Panc1 (cell line): ENCODE measurements at regions of chr4 and their contacts with region 1.

Region 1: DNA sequence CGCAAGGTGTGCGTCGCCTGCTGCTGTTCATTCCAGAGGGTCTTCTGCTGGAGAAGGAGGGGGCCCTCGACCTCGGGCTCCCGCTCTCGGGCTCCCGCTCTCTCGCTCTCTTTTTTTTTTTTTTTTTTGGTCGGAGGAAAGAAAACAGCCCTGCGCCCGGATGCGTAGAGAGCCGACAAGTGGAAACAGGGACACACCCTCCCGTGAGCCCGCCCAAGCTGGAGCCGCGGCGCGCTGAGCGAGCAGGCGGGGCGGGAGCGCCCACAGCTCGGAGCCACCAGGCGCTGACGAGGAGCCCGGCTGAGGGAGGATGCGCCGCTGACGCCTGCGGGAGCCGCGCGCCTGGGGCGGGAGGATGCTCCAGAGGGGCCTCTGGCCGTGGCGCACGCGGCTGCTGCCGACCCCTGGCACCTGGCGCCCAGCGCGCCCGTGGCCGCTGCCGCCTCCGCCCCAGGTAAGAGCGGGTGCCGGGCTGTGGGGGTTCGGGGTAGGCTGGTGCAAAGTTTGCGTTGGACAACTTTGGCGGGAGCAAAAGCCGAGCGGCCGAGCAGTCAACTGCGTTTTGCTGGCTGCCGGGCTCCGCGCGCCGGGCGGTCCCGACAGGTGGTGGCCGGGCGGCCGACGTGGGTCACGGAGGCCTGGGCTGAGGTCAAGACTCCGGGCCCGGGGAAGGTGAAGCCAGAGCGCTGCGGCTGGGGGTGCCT is at the start of gene MCUB:
- DNase-seq: peak; percentile 39
- ATAC-seq: peak; percentile 100
- H3K4me3 ChIP-seq: peak within 1 kb of the TSS; percentile 64 to 69
- H3K27ac ChIP-seq: peak within 1 kb of the TSS; percentile 72
- H3K4me1 ChIP-seq: no peaks in the 10 kb centered on the region; the same call in 1 of the 2 replicates
- H3K27me3 ChIP-seq: no peaks in the 10 kb centered on the region
- CTCF ChIP-seq: no peak
- total RNA-seq, gene MCUB: 24.1 TPM

Region 2: GRCh38 chr4:109009909-109010308 is 550.2 kb before region 1 on chr4:
- CTCF ChIA-PET with region 1: no interaction called
- POLR2A ChIA-PET with region 1: no interaction called
- in situ Hi-C with region 1: no loop called
- intact Hi-C with region 1: no loop called
- DNase-seq: no peak
- ATAC-seq: no peak
- H3K4me3 ChIP-seq: no peak overlapping the region
- H3K27ac ChIP-seq: no peak overlapping the region
- H3K4me1 ChIP-seq: no peaks in the 10 kb centered on the region
- H3K27me3 ChIP-seq: no peaks in the 10 kb centered on the region
- CTCF ChIP-seq: no peak

Region 3: GRCh38 chr4:109434007-109434971 is 125.8 kb before region 1 on chr4:
- CTCF ChIA-PET with region 1: no interaction called
- POLR2A ChIA-PET with region 1: interaction called, 10 read pairs
- in situ Hi-C with region 1: no loop called
- intact Hi-C with region 1: no loop called
- DNase-seq: no peak
- ATAC-seq: peak; percentile 80
- H3K4me3 ChIP-seq: peak overlapping the region; percentile 72 to 78
- H3K27ac ChIP-seq: peak overlapping the region; percentile 70
- H3K4me1 ChIP-seq: peaks cover 8% of the 10 kb centered on the region
- H3K27me3 ChIP-seq: no peaks in the 10 kb centered on the region
- CTCF ChIP-seq: no peak

Region 4: GRCh38 chr4:109578846-109579245 is 18.7 kb after region 1 on chr4:
- CTCF ChIA-PET with region 1: no interaction called
- POLR2A ChIA-PET with region 1: no interaction called
- in situ Hi-C with region 1: no loop called
- intact Hi-C with region 1: no loop called
- DNase-seq: no peak
- ATAC-seq: no peak
- H3K4me3 ChIP-seq: no peak overlapping the region
- H3K27ac ChIP-seq: no peak overlapping the region
- H3K4me1 ChIP-seq: no peaks in the 10 kb centered on the region
- H3K27me3 ChIP-seq: no peaks in the 10 kb centered on the region
- CTCF ChIP-seq: no peak

Region 5: GRCh38 chr4:109665783-109666485 is 105.8 kb after region 1 on chr4:
- CTCF ChIA-PET with region 1: no interaction called
- POLR2A ChIA-PET with region 1: no interaction called
- in situ Hi-C with region 1: no loop called
- intact Hi-C with region 1: no loop called
- DNase-seq: no peak
- ATAC-seq: no peak
- H3K4me3 ChIP-seq: no peak overlapping the region
- H3K27ac ChIP-seq: no peak overlapping the region
- H3K4me1 ChIP-seq: no peaks in the 10 kb centered on the region
- H3K27me3 ChIP-seq: no peaks in the 10 kb centered on the region
- CTCF ChIP-seq: no peak

Region 6: GRCh38 chr4:109702950-109703663 is 143.0 kb after region 1 on chr4 and contains the start of gene CASP6:
- CTCF ChIA-PET with region 1: no interaction called
- POLR2A ChIA-PET with region 1: no interaction called
- in situ Hi-C with region 1: no loop called
- intact Hi-C with region 1: loop called (anchors 10 kb)
- DNase-seq: no peak
- ATAC-seq: peak; percentile 90
- H3K4me3 ChIP-seq: peak within 1 kb of the TSS; percentile 67 to 76
- H3K27ac ChIP-seq: peak within 1 kb of the TSS; percentile 70
- H3K4me1 ChIP-seq: peaks cover 13% of the 10 kb centered on the region
- H3K27me3 ChIP-seq: no peaks in the 10 kb centered on the region
- CTCF ChIP-seq: peak; percentile 71
- total RNA-seq, gene CASP6: 15.2 TPM

Region 7: GRCh38 chr4:109902559-109903251 is 342.6 kb after region 1 on chr4:
- CTCF ChIA-PET with region 1: no interaction called
- POLR2A ChIA-PET with region 1: no interaction called
- in situ Hi-C with region 1: no loop called
- intact Hi-C with region 1: no loop called
- DNase-seq: no peak
- ATAC-seq: no peak
- H3K4me3 ChIP-seq: no peak overlapping the region
- H3K27ac ChIP-seq: no peak overlapping the region
- H3K4me1 ChIP-seq: no peaks in the 10 kb centered on the region
- H3K27me3 ChIP-seq: no peaks in the 10 kb centered on the region
- CTCF ChIP-seq: no peak

Region 8: DNA sequence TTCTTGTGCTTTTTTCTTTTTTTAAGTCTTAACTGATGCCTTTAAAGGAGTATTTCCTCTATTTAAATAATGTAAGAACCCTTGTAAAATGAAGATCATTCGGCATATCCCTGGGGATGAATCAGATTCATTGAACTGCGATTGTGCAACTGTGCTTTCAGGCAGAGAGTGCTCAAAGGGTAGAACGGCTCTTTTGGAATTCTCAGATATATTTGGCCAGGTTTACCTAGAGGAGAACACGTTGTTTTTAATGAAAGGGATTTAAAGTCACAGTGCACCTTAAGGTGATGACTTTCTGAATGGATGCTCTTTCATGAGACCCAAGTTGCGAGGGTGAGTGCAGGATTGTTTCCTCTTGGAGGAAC is 689.9 kb after region 1 on chr4:
- CTCF ChIA-PET with region 1: no interaction called
- POLR2A ChIA-PET with region 1: interaction called, 10 read pairs
- in situ Hi-C with region 1: no loop called
- intact Hi-C with region 1: no loop called
- DNase-seq: no peak
- ATAC-seq: no peak
- H3K4me3 ChIP-seq: no peak overlapping the region
- H3K27ac ChIP-seq: no peak overlapping the region
- H3K4me1 ChIP-seq: no peaks in the 10 kb centered on the region
- H3K27me3 ChIP-seq: no peaks in the 10 kb centered on the region
- CTCF ChIP-seq: no peak